AG04450 (cell line): ENCODE measurements at regions of chr2 and their contacts with region 1.

Region 1: DNA sequence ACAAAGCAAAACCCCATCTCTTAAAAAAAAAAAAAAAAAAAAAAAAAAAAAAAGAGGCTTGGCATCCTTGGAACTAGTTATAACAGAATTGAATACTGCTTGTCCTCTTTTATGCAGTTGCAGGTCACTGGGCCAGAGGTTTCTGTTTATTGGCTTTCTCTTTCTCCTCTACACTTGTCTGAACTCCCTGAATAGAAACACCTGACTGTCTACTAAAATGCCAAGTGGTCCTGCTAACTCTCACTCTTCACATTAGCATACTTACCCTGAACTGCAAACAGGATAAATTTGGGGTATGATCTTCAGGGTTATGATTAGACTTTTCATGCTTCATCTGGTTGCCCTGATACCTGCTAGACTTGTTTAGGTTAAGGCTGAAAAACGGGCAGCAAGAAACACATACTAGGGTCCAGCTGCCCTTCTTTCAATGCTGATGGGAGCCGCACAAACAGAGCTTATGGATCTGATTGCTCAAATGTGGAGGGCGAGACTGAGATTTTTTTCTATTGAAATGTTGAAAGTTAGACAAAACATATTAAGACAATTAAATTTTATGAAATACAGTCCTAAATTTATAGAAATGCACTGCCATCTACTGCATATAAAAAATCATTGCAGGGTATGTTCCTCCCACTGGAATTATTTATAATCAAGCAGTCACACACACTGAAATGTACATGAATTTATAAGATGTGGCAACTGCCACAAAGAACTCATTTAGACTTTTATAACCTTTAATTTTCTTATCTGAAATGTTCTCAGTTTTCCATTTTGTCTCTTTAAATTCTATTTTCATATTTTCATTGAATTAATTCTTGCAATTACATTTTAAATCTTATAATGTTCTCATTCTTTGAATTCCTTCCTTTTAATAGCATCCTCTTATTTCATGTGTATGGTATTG is 40.8 kb downstream of the GTF3C3 start:
- DNase-seq: no peak
- H3K4me3 ChIP-seq: no peak overlapping the region
- H3K27ac ChIP-seq: no peak overlapping the region
- H3K27me3 ChIP-seq: no peaks in the 10 kb centered on the region
- CTCF ChIP-seq: peak; percentile 43

Region 2: GRCh38 chr2:196464311-196464710 is 294.4 kb before region 1 on chr2:
- CTCF ChIA-PET with region 1: interaction called, 11 read pairs
- POLR2A ChIA-PET with region 1: no interaction called
- DNase-seq: no peak
- H3K4me3 ChIP-seq: no peak overlapping the region
- H3K27ac ChIP-seq: no peak overlapping the region
- H3K27me3 ChIP-seq: no peaks in the 10 kb centered on the region
- CTCF ChIP-seq: no peak

Region 3: DNA sequence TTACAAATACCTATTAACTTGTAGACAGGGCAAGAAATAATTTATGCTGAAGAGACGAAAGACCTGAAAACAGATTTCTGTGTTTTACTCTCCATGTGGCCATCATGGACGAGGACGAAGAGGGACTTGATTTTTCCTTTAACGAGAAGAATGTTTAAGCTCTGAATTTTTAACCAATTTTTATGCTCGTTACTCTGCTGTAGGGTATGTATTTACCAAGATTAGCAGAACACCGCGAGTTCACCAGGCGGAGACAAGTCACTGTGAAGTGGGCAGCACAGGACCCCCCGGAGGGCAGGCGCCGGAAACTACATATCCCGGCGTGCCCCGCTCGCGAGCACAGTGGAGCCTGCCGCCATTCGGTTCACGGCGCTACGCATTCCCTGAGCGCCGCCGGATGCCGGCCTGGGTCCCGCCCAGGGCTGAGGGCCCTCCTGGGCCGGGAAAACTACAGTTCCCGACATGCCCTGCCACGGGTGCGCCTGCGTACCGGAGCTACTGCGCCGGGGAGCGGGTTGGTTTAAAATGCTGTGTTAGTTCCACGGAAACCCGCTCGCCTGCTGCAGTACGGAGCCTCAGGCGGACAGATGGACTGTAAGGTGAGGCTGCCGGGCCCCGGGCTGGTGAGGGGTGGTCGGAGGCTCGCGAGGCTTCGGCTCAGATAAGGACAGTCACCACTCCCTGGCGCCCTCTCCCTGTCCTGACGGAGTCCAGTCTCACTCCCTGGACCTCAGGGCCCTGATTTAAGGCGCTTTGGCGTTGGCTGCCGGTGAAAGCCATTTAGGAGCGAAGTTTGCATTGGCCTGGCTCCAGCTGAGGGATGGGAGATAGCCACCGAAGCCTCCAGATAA is 119.3 kb before region 1 on chr2 and contains the start of gene CCDC150:
- CTCF ChIA-PET with region 1: no interaction called
- POLR2A ChIA-PET with region 1: interaction called, 10 read pairs
- DNase-seq: peak; percentile 76
- H3K4me3 ChIP-seq: peak within 1 kb of the TSS; percentile 84
- H3K27ac ChIP-seq: peak within 1 kb of the TSS; percentile 47
- H3K27me3 ChIP-seq: no peaks in the 10 kb centered on the region
- CTCF ChIP-seq: peak; percentile 24; the same call in 1 of the 2 replicates
- polyA plus RNA-seq, gene CCDC150: 1.3 and 1.5 TPM in 2 replicates

Region 4: GRCh38 chr2:196739031-196739430 is 19.7 kb before region 1 on chr2:
- CTCF ChIA-PET with region 1: no interaction called
- POLR2A ChIA-PET with region 1: no interaction called
- DNase-seq: no peak
- H3K4me3 ChIP-seq: no peak overlapping the region
- H3K27ac ChIP-seq: no peak overlapping the region
- H3K27me3 ChIP-seq: no peaks in the 10 kb centered on the region
- CTCF ChIP-seq: no peak

Region 5: DNA sequence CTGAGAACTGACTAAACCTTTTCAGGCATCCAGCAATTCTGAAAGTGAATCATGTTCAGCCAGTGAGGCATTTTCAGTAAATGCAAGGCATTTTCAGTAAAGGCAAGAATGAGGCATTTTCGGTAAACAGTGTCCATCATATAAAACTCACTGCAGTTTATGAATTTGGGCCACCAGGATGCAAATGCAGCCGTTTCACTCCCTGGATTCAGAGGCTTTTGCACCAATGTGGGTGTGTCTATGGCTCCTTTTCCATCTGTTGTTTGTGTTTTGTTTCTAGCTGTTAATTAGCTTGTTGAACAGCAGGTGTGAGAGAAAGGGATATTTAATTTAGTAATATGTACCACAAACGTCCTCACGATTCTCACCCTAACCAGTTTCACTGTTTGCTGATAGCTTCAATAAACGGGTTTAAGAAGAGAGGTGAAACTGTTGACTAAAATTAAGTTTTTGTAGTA is 284.0 kb after region 1 on chr2:
- CTCF ChIA-PET with region 1: no interaction called
- POLR2A ChIA-PET with region 1: no interaction called
- DNase-seq: no peak
- H3K4me3 ChIP-seq: no peak overlapping the region
- H3K27ac ChIP-seq: no peak overlapping the region
- H3K27me3 ChIP-seq: no peaks in the 10 kb centered on the region
- CTCF ChIP-seq: no peak